ENCODE measurements at regions of chr3 and their contacts with region 1.

Region 1: GRCh38 chr3:13215940-13216546 is 142.8 kb upstream of the IQSEC1 start:
- DNase-seq: peak; percentile 98
- ATAC-seq: peak; percentile 61
- H3K4me3 ChIP-seq: no peak overlapping the region
- H3K27ac ChIP-seq: peak overlapping the region; percentile 70
- H3K4me1 ChIP-seq: peaks cover 45% of the 10 kb centered on the region
- H3K27me3 ChIP-seq: no peaks in the 10 kb centered on the region
- CTCF ChIP-seq: no peak

Region 2: GRCh38 chr3:12954891-12955650 is 261.0 kb before region 1 on chr3:
- CTCF ChIA-PET with region 1: no interaction called
- POLR2A ChIA-PET with region 1: no interaction called
- intact Hi-C with region 1: no loop called
- DNase-seq: no peak
- ATAC-seq: peak; percentile 48; the same call in 1 of the 2 replicates
- H3K4me3 ChIP-seq: no peak overlapping the region
- H3K27ac ChIP-seq: no peak overlapping the region
- H3K4me1 ChIP-seq: no peaks in the 10 kb centered on the region
- H3K27me3 ChIP-seq: no peaks in the 10 kb centered on the region
- CTCF ChIP-seq: no peak

Region 3: GRCh38 chr3:13189639-13190377 is 26.2 kb before region 1 on chr3:
- CTCF ChIA-PET with region 1: no interaction called
- POLR2A ChIA-PET with region 1: no interaction called
- intact Hi-C with region 1: loop called (anchors 2 kb)
- DNase-seq: peak; percentile 84
- ATAC-seq: peak; percentile 77
- H3K4me3 ChIP-seq: no peak overlapping the region
- H3K27ac ChIP-seq: peak overlapping the region; percentile 81
- H3K4me1 ChIP-seq: peaks cover 45% of the 10 kb centered on the region
- H3K27me3 ChIP-seq: no peaks in the 10 kb centered on the region
- CTCF ChIP-seq: no peak

Region 4: DNA sequence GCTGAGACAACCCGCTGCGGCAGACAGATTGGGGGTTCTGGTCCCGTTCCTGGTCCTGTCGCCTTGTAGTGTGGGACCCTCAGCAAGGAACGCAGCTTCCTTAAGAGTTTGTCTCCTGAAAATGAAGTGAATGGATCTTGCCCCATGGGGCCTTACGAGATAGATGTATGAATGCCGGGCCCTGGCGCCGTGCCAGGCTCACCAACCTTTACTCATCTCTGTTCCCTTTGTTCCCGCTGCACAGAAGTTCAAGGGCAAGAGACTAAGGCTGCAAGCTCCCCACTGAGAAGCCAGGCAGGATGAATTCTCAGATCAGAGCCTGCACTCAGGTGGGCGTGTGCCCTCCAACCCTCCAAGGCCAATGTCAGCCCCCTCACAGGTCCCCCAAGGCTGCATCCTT is 19.9 kb after region 1 on chr3:
- CTCF ChIA-PET with region 1: no interaction called
- POLR2A ChIA-PET with region 1: no interaction called
- intact Hi-C with region 1: no loop called
- DNase-seq: no peak
- ATAC-seq: no peak
- H3K4me3 ChIP-seq: no peak overlapping the region
- H3K27ac ChIP-seq: no peak overlapping the region
- H3K4me1 ChIP-seq: peaks cover 13% of the 10 kb centered on the region
- H3K27me3 ChIP-seq: no peaks in the 10 kb centered on the region
- CTCF ChIP-seq: no peak

Region 5: GRCh38 chr3:13262493-13263211 is 46.6 kb after region 1 on chr3:
- CTCF ChIA-PET with region 1: no interaction called
- POLR2A ChIA-PET with region 1: no interaction called
- intact Hi-C with region 1: no loop called
- DNase-seq: peak; percentile 15
- ATAC-seq: no peak; the same call in 1 of the 2 replicates
- H3K4me3 ChIP-seq: no peak overlapping the region
- H3K27ac ChIP-seq: no peak overlapping the region
- H3K4me1 ChIP-seq: no peaks in the 10 kb centered on the region; the same call in 1 of the 2 replicates
- H3K27me3 ChIP-seq: no peaks in the 10 kb centered on the region
- CTCF ChIP-seq: no peak

Region 6: DNA sequence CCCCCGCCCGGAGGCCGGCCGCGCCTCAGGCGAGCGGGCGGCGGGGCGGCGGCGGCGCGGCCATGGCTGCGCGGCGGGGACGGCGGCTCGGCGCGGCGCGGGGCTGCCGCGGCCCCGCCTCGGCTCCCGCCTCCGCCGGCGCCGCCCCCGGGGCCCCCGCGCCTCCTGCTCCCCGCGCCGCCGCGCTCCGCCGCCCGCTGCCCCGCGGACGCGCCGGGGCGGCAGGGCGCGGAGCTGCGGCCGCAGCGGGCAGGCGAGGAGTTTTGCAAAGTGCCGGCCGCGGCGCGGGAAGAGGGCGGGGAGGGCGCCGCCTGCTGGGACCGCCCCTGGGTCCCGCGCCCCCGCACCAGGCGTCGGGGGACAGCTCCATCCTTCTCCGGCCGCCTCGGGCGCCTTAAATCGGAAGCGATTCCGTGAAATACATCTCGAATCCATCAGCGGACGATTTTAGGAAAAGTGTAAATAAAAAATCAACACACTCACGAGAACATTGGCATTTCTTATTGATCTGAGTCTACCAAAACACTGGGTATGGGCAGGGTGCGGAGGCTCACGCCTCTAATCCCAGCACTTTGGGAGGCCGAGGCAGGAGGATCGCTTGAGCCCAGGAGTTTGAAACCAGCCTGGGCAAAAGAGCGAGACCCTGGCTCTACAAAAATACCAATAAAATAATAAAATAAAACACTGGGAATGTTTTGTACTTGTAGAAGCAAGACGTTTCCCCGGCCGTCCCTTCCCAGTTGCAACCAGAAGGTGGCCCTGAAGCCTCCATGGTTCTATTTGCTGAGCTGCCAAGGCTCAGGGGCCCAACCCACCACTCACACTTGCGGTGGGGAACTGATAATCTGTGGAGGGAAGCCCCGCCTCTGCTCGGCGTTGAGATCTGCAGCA is 67.2 kb after region 1 on chr3:
- CTCF ChIA-PET with region 1: interaction called, 3 read pairs
- POLR2A ChIA-PET with region 1: no interaction called
- intact Hi-C with region 1: loop called (anchors 5 kb)
- DNase-seq: peak; percentile 63
- ATAC-seq: peak; percentile 44
- H3K4me3 ChIP-seq: peak overlapping the region; percentile 84
- H3K27ac ChIP-seq: no peak overlapping the region
- H3K4me1 ChIP-seq: peaks cover 15% of the 10 kb centered on the region
- H3K27me3 ChIP-seq: no peaks in the 10 kb centered on the region
- CTCF ChIP-seq: peak; percentile 63

Region 7: DNA sequence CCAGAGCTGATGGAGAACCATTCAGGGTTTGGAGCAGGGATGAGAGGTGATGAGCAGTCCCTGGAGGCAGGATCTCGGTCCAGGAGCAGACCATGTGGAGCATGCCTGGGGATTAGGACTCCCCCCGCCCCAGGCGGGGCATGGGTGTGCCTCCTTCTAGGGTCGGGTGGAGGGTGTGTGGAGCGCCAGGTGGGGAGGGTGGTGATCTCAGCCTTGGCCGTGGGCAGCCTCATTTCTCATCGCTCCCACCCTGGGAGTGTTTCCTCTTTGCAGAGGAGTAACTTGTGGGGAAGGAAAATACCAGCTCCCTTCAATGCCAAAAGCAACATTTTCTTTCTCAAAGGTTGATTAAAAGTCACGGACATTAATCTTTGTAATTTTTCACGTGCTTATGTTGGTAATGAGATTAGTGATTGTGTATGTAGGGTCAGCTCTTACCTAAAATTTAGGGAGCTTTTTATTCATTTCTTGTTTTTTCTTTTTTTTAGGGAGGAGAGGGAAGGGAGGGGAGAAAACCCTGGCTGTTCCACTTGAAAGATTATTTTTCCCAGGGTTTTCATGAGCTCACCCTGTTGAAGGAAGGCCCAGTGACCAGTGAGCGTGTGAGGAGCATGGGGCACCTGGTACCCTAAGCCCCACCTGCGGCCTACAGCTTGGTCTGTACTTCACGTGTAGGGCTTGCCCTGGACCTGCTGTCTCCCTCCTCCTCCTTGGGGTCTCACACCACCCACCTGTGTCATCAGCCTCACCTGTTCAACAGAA is 343.9 kb after region 1 on chr3:
- CTCF ChIA-PET with region 1: no interaction called
- POLR2A ChIA-PET with region 1: no interaction called
- intact Hi-C with region 1: no loop called
- DNase-seq: no peak
- ATAC-seq: no peak
- H3K4me3 ChIP-seq: no peak overlapping the region
- H3K27ac ChIP-seq: no peak overlapping the region
- H3K4me1 ChIP-seq: no peaks in the 10 kb centered on the region
- H3K27me3 ChIP-seq: no peaks in the 10 kb centered on the region
- CTCF ChIP-seq: no peak

Measured in PC-3 (cell line).